PC-9 (cell line): ENCODE measurements at regions of chr5 and their contacts with region 1.

Region 1: DNA sequence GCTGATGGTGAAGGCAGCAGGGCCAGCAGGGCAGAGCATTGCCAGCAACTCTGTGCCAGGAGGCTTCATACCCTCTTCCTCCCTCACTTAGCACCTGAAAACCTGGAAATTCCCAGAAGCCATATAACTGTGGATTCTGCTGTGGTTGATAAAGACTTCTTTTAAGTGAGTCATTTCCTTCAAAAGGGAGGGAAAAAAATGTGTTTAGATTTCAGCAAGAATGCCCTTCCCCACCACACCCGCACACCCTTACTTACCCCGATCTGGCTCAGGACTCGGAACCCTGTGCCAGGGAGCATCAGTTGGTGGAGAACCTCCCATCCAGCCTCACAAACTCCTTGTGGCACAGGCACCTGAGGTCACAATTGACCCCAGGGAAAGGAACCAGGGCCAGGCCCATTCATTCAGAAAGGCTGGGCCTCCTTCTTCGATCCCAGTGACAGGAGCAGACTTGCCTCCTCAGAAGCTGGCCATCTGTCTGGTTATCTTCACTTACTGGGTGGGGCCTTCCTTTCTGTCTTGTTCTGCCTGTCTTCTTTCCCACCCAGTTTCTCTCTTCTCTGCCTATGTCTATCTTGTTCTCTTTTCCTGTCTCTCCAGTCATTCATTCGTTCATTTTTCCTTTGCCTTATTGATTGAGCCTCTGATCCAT is 62.6 kb downstream of the PLAC8L1 start:
- DNase-seq: peak; percentile 66 to 83
- H3K4me3 ChIP-seq: no peak overlapping the region
- H3K27ac ChIP-seq: peak overlapping the region; percentile 48
- H3K4me1 ChIP-seq: peaks cover 19% of the 10 kb centered on the region
- H3K27me3 ChIP-seq: no peaks in the 10 kb centered on the region
- CTCF ChIP-seq: no peak

Region 2: DNA sequence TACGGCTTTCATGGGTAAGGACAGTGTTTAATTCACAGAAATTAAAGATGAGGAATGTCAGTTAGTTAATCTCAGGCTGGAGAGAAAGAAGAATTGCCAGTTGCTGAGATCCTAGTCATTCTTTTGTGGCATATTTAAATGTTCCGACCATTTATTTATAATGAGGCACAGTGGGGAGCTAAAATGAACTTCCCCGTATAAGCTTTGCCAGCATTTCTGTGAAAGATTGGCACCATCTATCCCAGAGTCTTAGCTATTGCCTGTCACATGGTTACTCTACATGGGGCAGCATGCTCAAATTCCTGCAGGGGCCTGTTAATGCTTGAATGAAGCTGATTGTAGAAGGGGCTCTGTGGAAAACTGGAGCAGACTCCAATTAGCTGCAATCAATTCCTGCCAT is 521.7 kb before region 1 on chr5:
- CTCF ChIA-PET with region 1: no interaction called
- POLR2A ChIA-PET with region 1: no interaction called
- intact Hi-C with region 1: no loop called
- DNase-seq: no peak
- H3K4me3 ChIP-seq: no peak overlapping the region
- H3K27ac ChIP-seq: no peak overlapping the region
- H3K4me1 ChIP-seq: no peaks in the 10 kb centered on the region
- H3K27me3 ChIP-seq: no peaks in the 10 kb centered on the region
- CTCF ChIP-seq: no peak

Region 3: DNA sequence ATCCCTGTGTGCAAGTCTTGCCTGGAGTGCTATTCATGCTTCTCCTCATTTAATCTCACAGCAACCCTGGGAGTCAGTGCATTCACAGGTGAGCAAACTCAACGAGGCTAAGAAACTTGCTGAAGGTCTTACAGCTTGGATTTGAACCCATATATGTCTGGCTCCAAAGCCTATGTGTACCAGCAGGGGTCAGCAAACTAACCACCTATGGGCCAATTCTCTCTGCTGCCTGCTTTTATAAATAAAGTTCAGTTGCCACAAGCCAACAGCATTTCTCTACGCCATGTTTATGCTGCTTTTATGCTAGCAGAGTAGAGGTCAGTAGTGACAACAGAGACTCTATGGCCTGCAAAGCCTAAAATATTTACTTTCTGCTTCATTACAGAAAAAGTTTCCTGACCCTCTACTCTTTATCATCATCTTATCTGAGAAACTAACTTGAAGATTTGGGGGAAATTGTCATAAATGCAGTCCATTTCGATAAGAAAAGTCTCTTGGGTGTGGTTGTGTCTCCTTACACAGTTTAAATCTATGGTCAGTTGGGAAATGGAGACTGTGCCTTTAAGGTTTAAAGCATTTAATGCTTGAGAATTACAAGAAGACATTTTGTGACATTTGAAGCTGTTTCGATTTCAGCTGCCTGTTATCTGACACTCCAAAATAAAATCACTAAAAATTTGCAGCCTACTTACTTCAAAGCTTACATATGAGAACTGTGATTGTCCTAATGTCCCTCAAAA is 345.3 kb before region 1 on chr5:
- CTCF ChIA-PET with region 1: interaction called, 7 read pairs
- POLR2A ChIA-PET with region 1: no interaction called
- intact Hi-C with region 1: loop called (anchors 2 kb)
- DNase-seq: no peak
- H3K4me3 ChIP-seq: no peak overlapping the region
- H3K27ac ChIP-seq: no peak overlapping the region
- H3K4me1 ChIP-seq: no peaks in the 10 kb centered on the region
- H3K27me3 ChIP-seq: no peaks in the 10 kb centered on the region
- CTCF ChIP-seq: peak; percentile 41

Region 4: DNA sequence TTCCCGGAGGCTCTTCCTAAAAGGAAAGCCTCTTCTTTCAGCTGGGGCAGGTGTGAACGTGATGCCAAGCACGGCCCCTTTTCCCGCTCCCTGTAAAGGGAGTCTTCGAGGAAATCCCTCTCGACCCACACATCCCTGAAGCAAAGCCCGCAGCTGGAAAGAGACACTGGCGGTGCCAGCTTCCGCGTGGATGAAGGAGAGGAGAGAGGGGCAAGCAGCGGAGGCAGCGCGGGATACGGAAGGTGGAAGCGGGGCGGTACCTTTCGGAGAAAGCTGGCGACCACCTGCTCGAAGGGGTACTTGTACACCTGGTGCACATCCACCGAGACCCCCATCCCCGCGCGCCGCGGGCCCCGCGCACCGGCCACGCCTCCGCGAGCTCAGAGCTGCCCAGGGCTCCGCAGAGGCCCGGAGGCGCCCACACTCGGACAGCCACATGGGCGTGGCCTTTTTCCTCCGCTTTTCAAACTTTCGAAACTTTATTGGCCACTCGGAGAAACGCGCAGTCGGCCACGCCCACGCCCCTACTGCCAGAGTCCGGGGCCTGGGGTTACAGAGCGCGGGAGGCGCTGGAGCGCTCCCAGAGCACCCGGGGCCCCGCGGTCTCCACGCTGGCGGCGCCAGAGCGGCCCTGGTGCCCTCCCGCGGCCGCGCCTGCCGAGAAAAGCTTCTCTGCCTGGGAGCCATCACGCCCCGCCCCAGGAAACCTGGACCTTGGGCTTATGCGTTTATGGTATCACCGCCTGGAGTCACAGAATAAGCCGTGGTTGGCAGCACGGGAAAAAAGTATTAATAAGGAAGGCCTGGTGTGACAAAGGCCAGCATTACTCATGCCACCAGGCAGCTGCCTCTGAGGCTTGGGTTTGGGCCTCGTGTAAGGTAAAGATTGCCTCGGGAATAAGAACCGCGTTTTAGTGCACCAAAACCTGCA is 207.6 kb before region 1 on chr5 and contains the start of gene PRELID2:
- CTCF ChIA-PET with region 1: no interaction called
- POLR2A ChIA-PET with region 1: no interaction called
- intact Hi-C with region 1: loop called (anchors 2 kb)
- DNase-seq: peak; percentile 80 to 94
- H3K4me3 ChIP-seq: peak within 1 kb of the TSS; percentile 71
- H3K27ac ChIP-seq: peak within 1 kb of the TSS; percentile 35
- H3K4me1 ChIP-seq: peaks cover 25% of the 10 kb centered on the region
- H3K27me3 ChIP-seq: no peaks in the 10 kb centered on the region
- CTCF ChIP-seq: 0 out of 2 replicates have a peak, but pooled peaks have one; percentile 2
- total RNA-seq, gene PRELID2: 24.8 and 27.7 TPM in 2 replicates

Region 5: GRCh38 chr5:145981589-145982491 is 60.9 kb before region 1 on chr5:
- CTCF ChIA-PET with region 1: no interaction called
- POLR2A ChIA-PET with region 1: interaction called, 3 read pairs
- intact Hi-C with region 1: loop called (anchors 2 kb)
- DNase-seq: peak; percentile 70 to 89
- H3K4me3 ChIP-seq: no peak overlapping the region
- H3K27ac ChIP-seq: peak overlapping the region; percentile 57
- H3K4me1 ChIP-seq: peaks cover 48% of the 10 kb centered on the region
- H3K27me3 ChIP-seq: no peaks in the 10 kb centered on the region
- CTCF ChIP-seq: no peak

Region 6: DNA sequence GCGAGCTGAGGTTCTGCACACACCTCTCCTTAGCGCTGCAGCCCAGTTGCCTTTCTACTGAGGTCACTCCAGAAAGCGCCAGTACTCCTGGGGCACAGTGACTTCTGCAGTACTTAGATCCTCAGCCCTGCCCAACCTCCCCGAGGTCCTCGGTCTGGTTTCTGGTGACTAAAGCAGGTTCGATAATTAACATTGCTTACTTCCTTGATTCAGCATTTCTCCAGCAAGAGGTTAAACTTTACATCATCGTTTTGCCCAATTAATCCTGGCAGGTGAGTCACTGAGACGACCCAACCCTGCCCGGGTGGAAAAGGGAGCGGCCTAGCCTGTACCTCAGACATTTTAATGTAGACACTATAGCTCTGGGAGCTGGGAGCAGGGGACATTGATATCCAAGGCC is 15.0 kb before region 1 on chr5:
- CTCF ChIA-PET with region 1: no interaction called
- POLR2A ChIA-PET with region 1: interaction called, 5 read pairs
- intact Hi-C with region 1: loop called (anchors 1 kb)
- DNase-seq: peak; percentile 75 to 99
- H3K4me3 ChIP-seq: no peak overlapping the region; the same call in 1 of the 2 replicates
- H3K27ac ChIP-seq: peak overlapping the region; percentile 79
- H3K4me1 ChIP-seq: peaks cover 26% of the 10 kb centered on the region
- H3K27me3 ChIP-seq: no peaks in the 10 kb centered on the region
- CTCF ChIP-seq: no peak

Region 7: DNA sequence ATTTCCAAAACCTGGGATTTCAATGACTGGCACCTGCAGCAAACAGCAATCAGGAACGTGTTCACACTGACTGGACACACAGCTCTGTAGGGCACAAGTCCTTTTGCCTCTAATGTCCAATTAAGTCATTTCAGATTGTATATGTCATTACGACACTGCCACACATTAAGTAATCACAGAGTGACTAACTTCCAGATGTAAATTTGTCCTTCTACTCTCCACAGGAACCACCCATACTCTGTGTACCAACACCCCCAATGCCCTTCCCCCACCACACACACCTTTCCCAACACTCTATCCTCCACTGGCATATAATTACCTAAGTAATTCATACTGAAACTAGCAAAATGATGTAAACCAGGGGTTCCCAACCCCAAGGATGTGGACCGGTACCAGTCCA is 109.2 kb after region 1 on chr5:
- CTCF ChIA-PET with region 1: no interaction called
- POLR2A ChIA-PET with region 1: no interaction called
- intact Hi-C with region 1: no loop called
- DNase-seq: peak in 1 of 2 experiments; percentile 46
- H3K4me3 ChIP-seq: no peak overlapping the region
- H3K27ac ChIP-seq: no peak overlapping the region
- H3K4me1 ChIP-seq: no peaks in the 10 kb centered on the region
- H3K27me3 ChIP-seq: no peaks in the 10 kb centered on the region
- CTCF ChIP-seq: no peak

Region 8: GRCh38 chr5:146238973-146239372 is 196.2 kb after region 1 on chr5:
- CTCF ChIA-PET with region 1: interaction called, 11 read pairs
- POLR2A ChIA-PET with region 1: no interaction called
- intact Hi-C with region 1: no loop called
- DNase-seq: no peak
- H3K4me3 ChIP-seq: no peak overlapping the region
- H3K27ac ChIP-seq: no peak overlapping the region
- H3K4me1 ChIP-seq: no peaks in the 10 kb centered on the region
- H3K27me3 ChIP-seq: no peaks in the 10 kb centered on the region
- CTCF ChIP-seq: no peak